Adrenal gland (tissue), 19 donors: ENCODE measurements at regions of chr3 and their contacts with region 1.

Region 1: DNA sequence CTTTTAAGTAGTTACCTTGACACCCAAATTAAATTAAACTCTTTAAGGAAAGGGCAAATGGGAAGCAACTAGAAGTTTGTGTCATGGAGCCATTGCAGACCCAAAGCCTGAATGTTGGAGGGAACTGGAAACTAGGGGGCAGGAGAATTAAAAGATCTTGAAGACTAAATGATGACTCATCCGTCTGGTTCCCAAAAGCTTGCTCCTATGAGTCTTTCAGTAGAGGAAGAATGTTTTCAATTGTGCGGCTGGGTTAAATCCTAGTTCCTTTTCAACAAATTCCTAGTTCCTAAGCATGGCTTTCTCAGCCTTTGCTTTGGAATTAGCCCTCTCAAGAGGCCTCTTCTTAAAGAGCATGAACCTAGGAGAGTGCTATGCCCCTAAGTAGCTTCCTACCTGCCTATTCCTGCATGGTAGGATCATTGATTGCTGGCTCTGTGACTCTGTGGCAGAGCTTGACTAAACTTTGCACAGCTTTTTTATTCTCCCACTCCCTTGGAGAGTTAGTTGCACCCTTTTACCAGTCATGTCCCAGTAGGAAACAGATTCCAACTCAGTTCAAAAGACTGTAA is 17.7 kb downstream of the CLEC3B start:
- DNase-seq: no peak
- H3K4me3 ChIP-seq: no peak overlapping the region
- H3K27ac ChIP-seq: peak overlapping the region in 1 of 5 donors; percentile 52
- H3K4me1 ChIP-seq: no peaks in the 10 kb centered on the region
- H3K27me3 ChIP-seq: no peaks in the 10 kb centered on the region
- CTCF ChIP-seq: no peak
- POLR2A ChIP-seq: no peak

Region 2: DNA sequence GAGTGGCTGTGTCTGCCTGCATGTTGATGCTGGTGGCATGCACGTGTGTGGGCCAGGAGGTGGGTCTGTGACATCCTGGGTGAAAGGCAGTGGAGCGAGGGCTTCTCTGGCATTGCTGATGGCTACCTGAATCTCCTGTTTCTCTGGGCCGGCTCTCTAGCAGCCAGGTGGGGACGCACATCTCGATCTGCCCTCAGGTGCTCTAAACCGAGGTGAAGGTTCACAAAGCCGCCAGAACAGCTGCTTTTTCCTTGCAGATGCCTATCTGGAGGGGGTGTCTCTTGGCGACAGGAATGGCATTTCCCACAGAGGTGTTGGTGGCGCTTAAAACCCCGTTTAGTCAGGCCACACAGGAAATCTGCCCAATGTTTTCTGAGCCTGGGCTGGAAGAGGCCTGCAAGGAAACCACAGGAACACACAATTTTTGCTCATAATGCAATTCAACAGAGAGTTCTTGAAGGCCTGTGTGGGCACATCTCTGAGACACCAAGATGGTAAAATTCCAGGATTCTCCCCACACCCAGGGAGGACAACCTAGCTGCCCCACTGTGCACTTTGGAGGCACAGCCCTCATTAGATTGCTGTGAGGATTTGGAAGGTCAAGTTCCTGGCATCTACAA is 170.4 kb after region 1 on chr3:
- intact Hi-C with region 1: loop called (anchors 2 to 5 kb)
- DNase-seq: no peak
- H3K4me3 ChIP-seq: no peak overlapping the region
- H3K27ac ChIP-seq: no peak overlapping the region
- H3K4me1 ChIP-seq: peaks cover 34 to 39% of the 10 kb centered on the region in 2 donors
- H3K27me3 ChIP-seq: no peaks in the 10 kb centered on the region
- CTCF ChIP-seq: no peak
- POLR2A ChIP-seq: no peak